ENCODE measurements at regions of chr7 and their contacts with region 1.

Region 1: GRCh38 chr7:25565949-25566348 is 337.7 kb upstream of the NPVF start:
- DNase-seq: peak in 1 of 2 donors; percentile 53
- ATAC-seq: peak; percentile 66
- H3K4me3 ChIP-seq: no peak overlapping the region
- H3K27ac ChIP-seq: no peak overlapping the region
- H3K4me1 ChIP-seq: peaks cover 0 to 3% of the 10 kb centered on the region in 2 donors
- H3K27me3 ChIP-seq: no peaks in the 10 kb centered on the region

Region 2: DNA sequence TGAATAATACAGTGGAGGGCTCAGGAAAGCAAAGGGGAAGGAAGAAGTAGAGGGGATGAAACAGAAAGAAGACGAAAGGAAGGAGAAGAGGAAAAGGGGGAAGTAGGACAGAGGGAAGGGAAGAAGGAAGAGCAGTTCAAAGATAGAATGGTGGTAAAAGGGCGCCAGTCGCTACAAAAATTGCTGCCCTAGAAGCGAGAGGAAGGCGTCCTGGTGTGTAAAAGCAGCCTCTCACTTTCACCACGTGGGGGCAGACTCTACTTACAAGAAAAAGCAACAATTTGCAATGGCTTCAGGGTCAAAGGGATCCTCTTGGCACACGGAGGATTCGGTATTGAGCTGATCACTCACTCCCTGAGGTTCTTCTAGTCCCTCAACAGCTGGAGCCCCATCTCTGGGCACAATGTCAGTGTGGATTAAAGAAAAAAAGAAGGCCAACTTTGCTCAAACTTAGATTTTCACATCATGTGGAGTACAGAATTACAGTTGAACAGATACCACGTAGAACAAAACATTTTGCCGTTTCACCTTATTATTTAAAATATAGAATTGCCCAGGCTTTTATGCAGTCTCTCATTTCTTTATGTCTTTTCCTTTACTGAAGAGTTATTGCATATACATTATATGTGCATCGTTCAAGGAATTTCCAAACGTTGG is 306.2 kb before region 1 on chr7:
- intact Hi-C with region 1: loop called (anchors 2 to 5 kb)
- DNase-seq: peak in 1 of 2 donors; percentile 59
- ATAC-seq: peak; percentile 70
- H3K4me3 ChIP-seq: no peak overlapping the region
- H3K27ac ChIP-seq: no peak overlapping the region
- H3K4me1 ChIP-seq: no peaks in the 10 kb centered on the region
- H3K27me3 ChIP-seq: no peaks in the 10 kb centered on the region

Region 3: DNA sequence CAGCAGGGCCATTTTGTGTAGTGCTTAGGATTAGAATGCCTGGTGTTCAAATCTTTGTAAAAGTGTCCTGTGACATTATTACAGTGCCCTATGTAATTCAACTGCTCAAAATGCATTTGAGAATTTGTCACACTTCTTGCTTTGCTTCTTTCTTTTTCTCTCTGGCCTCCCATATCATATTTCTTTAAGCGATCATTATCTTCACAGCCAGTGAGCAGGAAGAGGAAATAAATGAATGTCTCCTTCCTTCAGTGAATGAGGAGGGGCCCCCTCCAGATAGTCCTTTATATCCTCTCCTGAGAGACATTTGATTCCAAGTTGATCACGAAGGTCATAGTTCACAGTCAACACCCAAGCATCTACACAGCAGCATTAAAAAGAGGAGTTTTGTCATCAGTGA is 87.4 kb after region 1 on chr7:
- intact Hi-C with region 1: no loop called
- DNase-seq: no peak
- ATAC-seq: no peak
- H3K4me3 ChIP-seq: no peak overlapping the region
- H3K27ac ChIP-seq: no peak overlapping the region
- H3K4me1 ChIP-seq: peaks cover 1 to 3% of the 10 kb centered on the region in 2 donors
- H3K27me3 ChIP-seq: no peaks in the 10 kb centered on the region

Measured in aorta (tissue), 5 donors.